ENCODE measurements at regions of chr19 and their contacts with region 1.

Region 1: GRCh38 chr19:10027158-10027693 is 13.9 kb downstream of the RDH8 start:
- DNase-seq: no peak
- CTCF ChIP-seq: no peak

Region 2: DNA sequence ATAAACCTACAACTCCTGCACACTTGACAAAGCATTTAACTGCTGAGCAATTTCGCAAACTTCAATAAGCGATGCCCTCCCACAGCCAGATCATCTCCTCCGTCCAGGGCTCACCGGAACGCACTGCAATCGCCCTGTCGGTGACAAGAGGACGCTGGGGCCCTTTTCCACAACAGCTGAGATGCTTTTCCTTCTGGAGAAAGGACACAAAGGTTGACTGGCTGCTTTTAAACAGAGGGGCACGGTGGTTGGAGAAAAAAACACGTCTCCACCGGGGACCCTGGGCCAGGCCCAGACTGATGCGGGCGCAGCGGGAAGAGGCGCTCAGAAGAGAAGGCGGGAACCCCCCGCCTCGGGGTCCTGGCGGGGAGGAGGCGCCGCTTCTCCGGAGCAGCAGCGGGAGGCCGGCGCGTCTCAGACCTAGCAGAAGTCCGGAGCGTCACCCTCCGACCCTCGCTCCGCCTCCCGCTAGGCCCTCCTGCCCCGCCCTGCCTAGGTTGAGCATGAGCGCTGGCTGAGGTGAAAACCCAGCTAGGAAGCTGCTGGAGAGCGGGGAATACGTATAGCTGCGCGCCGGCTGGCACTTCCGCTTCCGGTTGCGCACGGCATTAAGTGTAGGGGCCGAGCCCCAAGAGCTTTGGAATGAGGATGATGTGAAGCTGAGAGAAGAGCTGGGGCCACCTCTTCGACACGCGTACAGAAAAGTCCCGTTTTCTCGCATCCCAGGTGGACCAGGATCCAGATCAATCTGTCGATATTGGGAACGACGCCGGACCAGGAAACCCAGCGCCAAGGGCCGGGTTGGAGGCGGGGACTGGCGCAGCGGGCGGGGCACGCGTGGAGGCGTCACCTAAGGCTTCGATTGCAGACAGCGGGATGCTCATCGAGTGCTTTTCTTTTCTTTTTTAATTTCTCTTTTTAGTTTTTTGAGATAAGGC is 258.8 kb before region 1 on chr19 and contains the start of gene ZNF846:
- CTCF ChIA-PET with region 1: no interaction called
- POLR2A ChIA-PET with region 1: no interaction called
- DNase-seq: peak; percentile 95
- CTCF ChIP-seq: no peak

Region 3: DNA sequence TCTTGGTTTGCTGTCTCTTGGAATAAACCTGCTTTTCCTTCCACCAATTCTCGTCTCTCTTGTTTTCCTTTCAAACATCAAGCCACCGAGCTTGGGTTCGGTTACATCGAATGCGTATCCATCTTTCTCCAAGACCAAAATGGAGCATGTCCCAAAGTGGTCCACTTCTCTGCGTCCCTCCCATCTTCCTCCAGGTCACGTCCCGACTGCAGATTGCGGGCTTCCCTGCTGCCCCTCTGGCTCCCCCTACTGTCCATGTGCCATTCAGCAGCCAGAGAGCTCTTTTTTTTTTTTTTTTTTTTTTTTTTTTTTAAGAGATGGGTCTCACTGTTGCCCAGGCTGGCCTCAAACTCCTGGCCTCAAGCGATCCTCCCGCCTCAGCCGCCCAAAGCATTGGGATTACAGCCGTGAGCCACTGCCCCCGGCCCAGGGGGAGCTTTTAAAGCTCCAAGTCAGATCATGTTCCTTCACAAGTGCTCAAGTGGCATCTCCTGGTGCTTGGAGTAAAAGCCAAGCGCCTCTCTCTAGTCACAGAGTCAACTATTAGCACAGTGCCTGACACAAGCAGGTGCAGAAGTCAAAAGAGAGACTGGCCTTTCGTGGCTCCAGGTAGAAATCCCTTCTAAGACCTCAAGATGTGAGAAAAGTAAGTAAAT is 26.9 kb before region 1 on chr19:
- CTCF ChIA-PET with region 1: interaction called, 34 read pairs
- POLR2A ChIA-PET with region 1: no interaction called
- DNase-seq: peak; percentile 86
- CTCF ChIP-seq: peak; percentile 76

Region 4: GRCh38 chr19:10010247-10010691 is 17.0 kb before region 1 on chr19 and contains the start of gene COL5A3:
- CTCF ChIA-PET with region 1: interaction called, 12 read pairs
- POLR2A ChIA-PET with region 1: no interaction called
- DNase-seq: no peak
- CTCF ChIP-seq: no peak

Region 5: DNA sequence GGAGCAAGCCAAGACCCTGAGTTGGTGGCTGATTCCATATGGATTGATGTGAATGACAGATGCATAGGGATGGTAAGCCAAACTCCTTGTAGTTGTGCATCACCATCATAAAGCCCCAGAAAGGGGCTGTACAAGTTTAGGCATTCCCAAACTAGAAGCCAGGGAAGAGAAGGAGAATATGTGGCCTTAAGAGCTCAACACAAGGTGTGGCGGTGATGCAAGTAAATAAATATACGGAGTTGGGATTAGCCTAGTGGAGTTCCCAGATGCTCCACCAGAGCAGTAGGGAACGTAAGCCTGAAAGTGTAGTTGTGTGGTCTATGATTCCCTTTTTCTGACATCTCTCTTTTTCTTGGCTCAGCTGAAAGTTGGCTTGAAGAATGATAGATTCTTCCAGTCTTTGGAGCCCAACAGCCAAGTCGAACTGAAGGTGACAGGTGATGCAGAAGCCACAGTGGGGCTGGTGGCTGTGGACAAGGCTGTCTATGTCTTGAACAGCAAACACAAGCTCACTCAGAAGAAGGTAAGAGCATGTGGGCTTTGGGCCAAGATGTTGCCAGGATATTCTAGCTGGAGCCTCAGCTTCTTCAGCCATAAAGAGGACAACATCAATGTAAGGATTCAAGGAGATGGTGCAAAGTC is 16.2 kb after region 1 on chr19:
- CTCF ChIA-PET with region 1: interaction called, 10 read pairs
- POLR2A ChIA-PET with region 1: no interaction called
- DNase-seq: no peak
- CTCF ChIP-seq: no peak

Region 6: DNA sequence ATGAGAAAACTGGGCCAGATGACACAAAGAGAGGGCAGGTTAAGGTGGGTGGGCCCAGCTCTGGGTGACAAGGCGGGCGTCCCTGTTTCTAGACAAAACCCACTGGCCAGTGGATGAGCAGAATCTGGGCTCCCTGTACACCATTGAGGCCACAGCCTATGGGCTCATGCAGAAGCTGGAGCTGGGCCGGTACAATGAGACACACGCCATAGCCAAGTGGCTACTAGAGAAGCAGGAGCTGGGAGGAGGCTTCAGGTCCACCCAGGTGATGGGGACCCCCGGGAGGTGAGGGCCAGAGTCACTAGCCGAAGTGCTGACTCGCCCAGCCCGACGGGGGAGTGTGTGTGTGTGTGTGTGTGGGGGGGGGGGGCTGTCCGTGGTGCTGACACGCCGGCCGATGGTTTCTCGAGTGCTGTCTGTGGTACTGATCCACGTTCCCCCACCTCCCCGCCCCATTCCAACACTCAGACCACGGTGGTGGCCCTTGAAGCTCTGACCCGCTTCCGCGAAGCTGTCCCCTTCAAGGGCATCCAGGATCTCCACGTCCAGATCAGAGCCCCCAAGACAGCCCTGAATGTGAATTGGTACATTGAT is 34.6 kb after region 1 on chr19:
- CTCF ChIA-PET with region 1: interaction called, 10 read pairs
- POLR2A ChIA-PET with region 1: no interaction called
- DNase-seq: no peak
- CTCF ChIP-seq: no peak

Region 7: GRCh38 chr19:10074153-10074552 is 46.9 kb after region 1 on chr19:
- CTCF ChIA-PET with region 1: interaction called, 12 read pairs
- POLR2A ChIA-PET with region 1: no interaction called
- DNase-seq: peak; percentile 46
- CTCF ChIP-seq: peak; percentile 21

Region 8: DNA sequence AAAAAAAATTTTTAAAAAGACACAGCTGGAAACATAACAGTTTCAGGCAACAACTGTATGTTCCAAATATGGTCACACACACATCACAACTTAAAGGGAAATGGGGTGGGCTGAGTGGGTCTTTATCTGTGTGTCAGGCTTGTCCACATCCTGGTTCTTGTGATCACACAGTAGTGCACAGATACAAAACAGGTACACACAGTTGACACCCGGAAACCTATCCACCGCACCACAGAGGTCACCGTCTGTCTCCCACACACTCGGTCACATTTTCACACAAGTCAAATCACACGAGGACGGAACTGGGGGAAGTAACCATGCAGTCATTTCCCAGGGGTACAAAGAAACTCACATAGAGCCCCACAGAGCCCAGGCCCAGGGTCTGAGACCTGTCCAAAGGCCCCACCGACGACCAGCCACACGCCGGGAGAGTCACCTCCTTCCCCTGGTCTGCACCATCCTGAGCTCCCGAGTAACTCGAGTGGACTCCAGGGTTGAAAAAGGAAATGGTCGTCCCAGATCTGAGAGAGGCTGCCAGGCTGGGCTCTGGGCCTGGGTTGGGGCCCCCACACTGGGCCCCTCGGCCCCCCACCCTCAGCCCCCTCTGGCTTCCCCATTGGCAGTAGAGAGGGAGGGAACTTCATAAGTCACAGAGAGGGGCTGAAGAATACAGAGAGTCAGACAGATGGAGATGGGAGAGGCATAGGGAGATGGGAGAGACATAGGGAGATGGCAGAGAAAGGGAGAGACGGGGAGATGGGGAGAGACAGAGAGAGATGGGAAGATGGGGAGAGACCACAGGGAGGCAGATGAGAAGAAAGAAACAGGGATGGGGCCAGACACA is 77.7 kb after region 1 on chr19:
- CTCF ChIA-PET with region 1: no interaction called
- POLR2A ChIA-PET with region 1: no interaction called
- DNase-seq: peak; percentile 77
- CTCF ChIP-seq: no peak

Region 9: GRCh38 chr19:10155839-10156238 is 128.6 kb after region 1 on chr19:
- CTCF ChIA-PET with region 1: no interaction called
- POLR2A ChIA-PET with region 1: no interaction called
- DNase-seq: no peak
- CTCF ChIP-seq: no peak

Measured in GM10248 (cell line).